Heart left ventricle (tissue), 16 donors: ENCODE measurements at regions of chr20 and their contacts with region 1.

Region 1: DNA sequence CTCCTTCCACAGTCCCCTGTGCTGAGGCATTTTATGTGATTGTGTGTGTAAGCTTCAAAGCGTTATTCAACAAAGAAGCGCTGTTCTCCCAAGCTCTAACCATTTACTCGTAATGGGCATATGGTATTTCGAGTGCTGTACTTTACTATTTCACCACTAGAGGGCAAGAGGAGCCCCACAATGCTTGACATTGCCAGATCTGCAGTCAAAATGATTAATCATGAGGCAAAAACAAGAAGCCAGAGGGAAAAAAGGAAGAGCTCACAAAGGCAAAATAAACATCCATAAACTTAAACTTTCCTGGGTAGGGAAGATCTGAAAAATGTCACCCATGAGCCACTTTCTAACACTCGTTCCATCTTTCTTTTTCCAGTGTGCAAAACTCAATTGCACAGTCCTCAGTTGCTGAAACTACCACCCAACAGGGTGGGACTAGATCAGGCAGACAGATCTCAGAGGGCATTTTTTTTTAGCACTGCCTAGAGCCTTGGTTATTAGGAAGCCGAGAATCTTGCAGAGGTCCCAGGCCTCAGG is 215.0 kb upstream of the PLCB4 start:
- DNase-seq: peak in 2 of 5 donors; percentile 20 to 29
- ATAC-seq: peak; percentile 56 to 86 (median 82)
- H3K4me3 ChIP-seq: peak overlapping the region in 9 of 12 donors; percentile 6 to 39 (median 21)
- H3K27ac ChIP-seq: peak overlapping the region; percentile 34 to 81 (median 70)
- H3K4me1 ChIP-seq: peaks cover 0 to 25% (median 15%) of the 10 kb centered on the region in 12 donors
- H3K27me3 ChIP-seq: no peaks in the 10 kb centered on the region
- CTCF ChIP-seq: peak; percentile 78 to 93 (median 89)
- POLR2A ChIP-seq: no peak

Region 2: DNA sequence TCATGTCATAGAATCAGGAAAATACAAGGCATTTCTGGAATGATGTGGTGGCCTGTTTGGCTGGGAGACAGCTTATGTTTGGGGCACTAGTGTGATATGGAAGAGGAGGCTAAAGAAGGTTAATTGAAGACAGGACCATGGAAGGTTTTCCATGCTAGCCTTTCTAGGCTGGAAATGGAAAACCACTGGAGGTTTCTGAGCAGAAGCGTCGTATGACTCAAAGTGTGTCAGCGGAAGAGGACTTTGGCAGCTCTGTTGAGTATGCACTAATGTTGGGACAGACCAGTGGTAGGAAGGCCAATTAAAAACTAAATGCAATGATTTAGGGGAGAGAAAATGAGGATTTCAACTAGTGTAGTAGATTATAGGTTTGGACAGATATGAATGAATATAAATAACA is 308.7 kb before region 1 on chr20:
- intact Hi-C with region 1: no loop called
- DNase-seq: no peak
- ATAC-seq: peak in 1 of 4 donors; percentile 75
- H3K4me3 ChIP-seq: no peak overlapping the region
- H3K27ac ChIP-seq: no peak overlapping the region
- H3K4me1 ChIP-seq: peaks cover 0 to 34% (median 17%) of the 10 kb centered on the region in 12 donors
- H3K27me3 ChIP-seq: no peaks in the 10 kb centered on the region
- CTCF ChIP-seq: no peak
- POLR2A ChIP-seq: no peak

Region 3: GRCh38 chr20:8557711-8558110 is 296.2 kb before region 1 on chr20:
- intact Hi-C with region 1: no loop called
- DNase-seq: no peak
- ATAC-seq: no peak
- H3K4me3 ChIP-seq: no peak overlapping the region
- H3K27ac ChIP-seq: no peak overlapping the region
- H3K4me1 ChIP-seq: peaks cover 0 to 4% (median 0%) of the 10 kb centered on the region in 12 donors
- H3K27me3 ChIP-seq: no peaks in the 10 kb centered on the region
- CTCF ChIP-seq: no peak
- POLR2A ChIP-seq: no peak

Region 4: DNA sequence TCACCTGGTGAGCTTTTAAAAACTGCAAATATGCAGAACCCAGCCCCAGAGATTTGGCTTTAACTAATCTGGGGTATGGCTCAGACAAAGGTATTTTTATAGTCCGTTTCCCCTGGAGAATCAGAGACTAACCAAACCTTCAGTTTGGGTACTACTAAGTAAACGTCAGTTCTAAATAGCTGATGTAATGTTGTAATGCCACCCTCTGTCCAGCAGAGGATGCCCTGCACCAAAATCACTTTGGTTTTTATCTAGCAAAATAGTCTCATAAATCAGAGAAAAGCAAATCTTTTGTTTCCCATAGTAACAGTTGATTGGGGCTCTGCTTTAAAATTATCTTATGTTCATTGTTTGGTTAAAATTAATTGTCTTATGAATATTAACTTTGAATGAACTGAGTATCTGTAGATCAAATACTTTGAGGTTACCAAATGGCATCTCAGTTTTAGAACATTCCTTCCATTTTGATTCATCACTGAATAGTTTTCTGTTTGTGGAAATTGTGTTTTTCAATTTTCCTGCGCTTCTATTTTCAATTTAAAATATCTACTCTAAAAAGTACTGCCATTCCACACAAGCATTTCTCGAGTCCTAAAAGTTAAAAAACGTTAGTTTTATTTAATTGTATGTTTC is 63.3 kb before region 1 on chr20:
- intact Hi-C with region 1: loop called in 4 of 10 experiments (anchors 5 to 10 kb)
- DNase-seq: peak in 3 of 5 donors; percentile 19 to 38 (median 37)
- ATAC-seq: peak in 1 of 4 donors; percentile 50
- H3K4me3 ChIP-seq: no peak overlapping the region
- H3K27ac ChIP-seq: no peak overlapping the region
- H3K4me1 ChIP-seq: peaks cover 0 to 8% (median 0%) of the 10 kb centered on the region in 12 donors
- H3K27me3 ChIP-seq: no peaks in the 10 kb centered on the region
- CTCF ChIP-seq: peak; percentile 86 to 100 (median 94)
- POLR2A ChIP-seq: no peak

Region 5: DNA sequence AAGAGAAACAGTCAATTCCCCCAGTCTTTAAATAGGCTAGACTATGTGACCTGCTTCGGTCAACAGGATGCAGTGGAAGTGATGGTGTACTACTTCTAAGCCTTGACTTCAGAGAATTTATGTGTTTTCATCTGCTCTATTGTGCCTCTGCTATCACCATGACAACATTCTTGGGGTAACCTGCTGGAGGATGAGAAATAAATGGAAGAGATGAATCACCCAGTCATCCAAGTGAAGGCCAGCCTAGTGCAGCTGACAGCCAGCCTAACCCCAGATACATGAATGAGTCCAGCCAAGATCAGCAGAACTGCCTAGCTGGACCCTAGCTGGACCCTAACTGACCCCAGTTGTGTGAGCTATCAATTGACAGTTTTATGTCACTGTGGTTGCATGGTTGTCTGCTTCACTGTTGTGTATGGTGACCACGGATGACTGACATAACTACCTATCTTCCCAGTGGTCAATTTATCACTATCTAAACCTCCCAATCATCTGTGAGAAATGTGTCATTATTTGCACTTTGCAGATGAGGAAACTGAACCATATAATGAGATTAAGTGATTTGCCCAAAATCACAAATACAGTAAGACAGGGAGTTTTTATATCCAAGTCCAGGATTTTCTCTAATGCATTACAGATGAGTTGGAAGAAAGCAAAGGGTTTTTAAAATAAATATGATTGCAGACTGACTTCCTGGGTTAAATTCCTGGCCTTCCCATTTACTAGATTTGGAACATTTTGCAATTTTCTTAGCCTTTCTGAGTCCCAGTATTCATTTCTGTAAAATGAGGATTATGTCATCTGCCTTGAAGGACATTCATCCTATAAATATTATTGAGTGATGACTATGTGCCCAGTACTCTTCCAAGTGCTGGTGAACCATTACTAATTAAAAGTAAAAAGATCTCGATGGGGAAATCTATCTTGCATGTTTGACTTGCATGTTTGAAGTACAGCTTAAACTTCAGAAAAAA is 78.6 kb after region 1 on chr20:
- intact Hi-C with region 1: loop called in 1 of 10 experiments (anchors 10 kb)
- DNase-seq: no peak
- ATAC-seq: peak in 2 of 4 donors; percentile 56 to 57
- H3K4me3 ChIP-seq: no peak overlapping the region
- H3K27ac ChIP-seq: peak overlapping the region in 8 of 12 donors; percentile 18 to 81 (median 58)
- H3K4me1 ChIP-seq: peaks cover 0 to 27% (median 8%) of the 10 kb centered on the region in 12 donors
- H3K27me3 ChIP-seq: no peaks in the 10 kb centered on the region
- CTCF ChIP-seq: no peak
- POLR2A ChIP-seq: no peak

Region 6: DNA sequence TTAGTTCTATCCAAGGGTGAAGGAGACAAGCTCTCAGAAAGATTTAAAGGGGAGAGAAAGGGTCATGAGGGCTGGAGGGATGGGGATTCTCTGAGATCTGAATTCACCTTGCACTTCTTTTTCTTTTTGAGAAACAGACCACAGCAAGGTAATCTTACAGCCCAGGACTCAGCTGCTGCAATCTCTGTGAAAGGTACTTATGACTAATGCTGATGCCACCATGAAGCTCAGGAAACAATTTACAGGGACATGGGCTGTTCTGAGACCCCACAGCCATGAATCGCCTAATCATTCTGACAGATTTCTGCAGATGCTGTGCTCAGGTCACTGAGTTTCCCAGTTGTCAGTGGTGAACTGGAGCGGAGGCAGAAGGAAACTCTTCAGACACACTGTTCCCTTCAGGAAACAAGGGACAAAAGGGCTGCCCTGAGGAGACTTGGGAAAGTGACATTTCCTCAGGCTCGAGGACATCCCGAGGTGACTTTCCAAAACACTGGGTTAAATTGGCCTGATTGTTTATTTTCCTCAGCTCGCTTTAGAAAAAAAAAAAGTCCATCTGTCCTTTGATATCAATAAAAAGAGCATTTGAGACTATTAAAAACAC is 111.2 kb after region 1 on chr20:
- intact Hi-C with region 1: loop called in 2 of 10 experiments (anchors 10 kb)
- DNase-seq: peak in 2 of 5 donors; percentile 24 to 26
- ATAC-seq: peak in 3 of 4 donors; percentile 26 to 58 (median 37)
- H3K4me3 ChIP-seq: no peak overlapping the region
- H3K27ac ChIP-seq: peak overlapping the region in 4 of 12 donors; percentile 1 to 42 (median 11)
- H3K4me1 ChIP-seq: peaks cover 0 to 31% (median 12%) of the 10 kb centered on the region in 12 donors
- H3K27me3 ChIP-seq: no peaks in the 10 kb centered on the region
- CTCF ChIP-seq: no peak
- POLR2A ChIP-seq: no peak

Region 7: DNA sequence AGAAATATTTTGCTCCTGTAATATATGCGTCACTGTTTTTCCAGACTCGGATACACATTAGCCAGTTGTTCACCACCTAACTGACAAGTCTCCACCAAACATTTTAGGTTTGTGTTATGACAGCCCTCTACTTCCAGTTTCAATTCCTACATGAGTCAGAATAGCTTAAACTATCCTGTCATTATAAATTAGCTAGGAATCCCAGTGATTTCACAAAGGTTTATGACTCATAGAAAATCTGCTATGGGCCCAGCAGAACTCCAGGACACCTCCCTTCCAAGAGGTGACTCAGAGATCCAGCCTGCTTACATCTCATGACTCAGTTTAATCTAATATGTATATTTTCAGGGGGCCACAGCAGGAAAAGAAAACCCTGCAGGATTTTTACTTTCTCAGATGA is 197.6 kb after region 1 on chr20:
- intact Hi-C with region 1: loop called in 1 of 10 experiments (anchors 10 kb)
- DNase-seq: no peak
- ATAC-seq: peak in 2 of 4 donors; percentile 24 to 50
- H3K4me3 ChIP-seq: no peak overlapping the region
- H3K27ac ChIP-seq: no peak overlapping the region
- H3K4me1 ChIP-seq: peaks cover 0 to 11% (median 0%) of the 10 kb centered on the region in 12 donors
- H3K27me3 ChIP-seq: no peaks in the 10 kb centered on the region
- CTCF ChIP-seq: no peak
- POLR2A ChIP-seq: no peak

Region 8: GRCh38 chr20:9353180-9353915 is 499.5 kb after region 1 on chr20:
- intact Hi-C with region 1: loop called in 5 of 10 experiments (anchors 2 to 5 kb)
- DNase-seq: no peak
- ATAC-seq: peak in 3 of 4 donors; percentile 57 to 63 (median 62)
- H3K4me3 ChIP-seq: no peak overlapping the region
- H3K27ac ChIP-seq: peak overlapping the region in 4 of 12 donors; percentile 4 to 10 (median 9)
- H3K4me1 ChIP-seq: peaks cover 0 to 35% (median 19%) of the 10 kb centered on the region in 12 donors
- H3K27me3 ChIP-seq: no peaks in the 10 kb centered on the region
- CTCF ChIP-seq: peak in 9 of 12 donors; percentile 10 to 38 (median 18)
- POLR2A ChIP-seq: no peak

Region 9: DNA sequence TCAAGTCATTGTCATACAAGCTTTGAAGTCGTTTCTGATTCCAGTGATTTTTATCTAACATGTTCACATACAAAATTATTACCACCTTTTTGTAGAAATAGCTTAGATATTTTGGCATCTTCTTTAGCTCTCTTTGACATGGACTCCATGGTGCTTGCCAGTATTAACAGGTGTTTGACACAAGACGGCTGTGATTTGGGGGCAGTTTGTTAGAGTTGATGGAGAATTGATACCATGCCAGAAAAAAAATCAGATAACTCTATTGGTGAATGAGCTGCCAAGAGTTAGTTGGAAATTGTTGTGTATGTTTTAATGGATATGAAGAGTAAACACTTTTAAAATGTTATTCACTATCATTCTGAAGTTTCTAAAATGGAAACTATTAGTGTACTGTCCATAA is 513.9 kb after region 1 on chr20:
- intact Hi-C with region 1: loop called in 4 of 10 experiments (anchors 5 kb)
- DNase-seq: no peak
- ATAC-seq: no peak
- H3K4me3 ChIP-seq: no peak overlapping the region
- H3K27ac ChIP-seq: no peak overlapping the region
- H3K4me1 ChIP-seq: peaks cover 0 to 14% (median 0%) of the 10 kb centered on the region in 12 donors
- H3K27me3 ChIP-seq: no peaks in the 10 kb centered on the region
- CTCF ChIP-seq: no peak
- POLR2A ChIP-seq: no peak